ENCODE measurements at regions of chr3 and their contacts with region 1.

Region 1: GRCh38 chr3:52471371-52472238 is 16.2 kb downstream of the NISCH start:
- DNase-seq: peak; percentile 51 to 73 (median 61)
- H3K4me3 ChIP-seq: no peak overlapping the region
- H3K27ac ChIP-seq: no peak overlapping the region
- H3K4me1 ChIP-seq: peaks cover 0 to 14% (median 0%) of the 10 kb centered on the region in 4 experiments
- H3K27me3 ChIP-seq: no peaks in the 10 kb centered on the region

Region 2: GRCh38 chr3:52455283-52456168 is 16.1 kb before region 1 on chr3 and contains the start of gene NISCH:
- CTCF ChIA-PET with region 1: interaction called, 61 read pairs
- POLR2A ChIA-PET with region 1: no interaction called
- DNase-seq: peak; percentile 82 to 91 (median 91)
- H3K4me3 ChIP-seq: peak within 1 kb of the TSS; percentile 61 to 90 (median 78)
- H3K27ac ChIP-seq: peak within 1 kb of the TSS; percentile 40 to 81
- H3K4me1 ChIP-seq: peaks cover 0 to 31% (median 23%) of the 10 kb centered on the region in 4 experiments
- H3K27me3 ChIP-seq: no peaks in the 10 kb centered on the region

Region 3: DNA sequence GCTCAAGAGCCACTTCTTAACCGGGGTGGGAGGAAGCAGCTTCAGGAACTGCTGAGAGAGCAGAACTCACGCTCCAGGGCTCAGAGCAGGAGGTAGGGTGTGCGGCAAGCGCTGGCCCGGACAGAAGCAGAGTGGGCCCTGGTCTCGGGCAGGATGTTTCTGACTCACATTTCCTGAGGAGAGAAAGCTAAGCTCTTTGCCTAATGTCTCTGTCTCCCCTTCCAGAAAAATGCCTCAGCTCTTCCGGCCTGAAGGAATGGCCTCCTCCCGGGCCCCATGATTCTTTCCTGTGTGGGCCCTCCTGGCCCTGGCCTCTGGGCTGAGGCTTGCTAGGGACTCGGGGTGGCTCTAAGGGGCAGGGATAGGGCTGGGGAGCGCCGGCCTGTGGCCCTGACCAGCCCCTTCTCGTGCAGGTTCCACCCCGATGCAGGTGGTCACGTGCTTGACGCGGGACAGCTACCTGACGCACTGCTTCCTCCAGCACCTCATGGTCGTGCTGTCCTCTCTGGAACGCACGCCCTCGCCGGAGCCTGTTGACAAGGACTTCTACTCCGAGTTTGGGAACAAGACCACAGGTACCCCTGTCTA is 19.4 kb after region 1 on chr3:
- CTCF ChIA-PET with region 1: interaction called, 65 read pairs
- POLR2A ChIA-PET with region 1: no interaction called
- DNase-seq: peak; percentile 36 to 74 (median 69)
- H3K4me3 ChIP-seq: peak overlapping the region in 2 of 7 experiments; percentile 2 to 6
- H3K27ac ChIP-seq: no peak overlapping the region
- H3K4me1 ChIP-seq: peaks cover 0 to 70% (median 57%) of the 10 kb centered on the region in 4 experiments
- H3K27me3 ChIP-seq: no peaks in the 10 kb centered on the region

Region 4: GRCh38 chr3:52561028-52561747 is 89.6 kb after region 1 on chr3:
- CTCF ChIA-PET with region 1: interaction called, 39 read pairs
- POLR2A ChIA-PET with region 1: no interaction called
- DNase-seq: no peak
- H3K4me3 ChIP-seq: no peak overlapping the region
- H3K27ac ChIP-seq: no peak overlapping the region
- H3K4me1 ChIP-seq: peaks cover 0 to 7% (median 3%) of the 10 kb centered on the region in 4 experiments
- H3K27me3 ChIP-seq: no peaks in the 10 kb centered on the region